Naive thymus-derived CD8-positive, alpha-beta T cell (primary cell): ENCODE measurements at regions of chr2 and their contacts with region 1.

Region 1: GRCh38 chr2:226835796-226836547 is at the start of gene RHBDD1:
- DNase-seq: peak; percentile 90 to 98 (median 94)
- ATAC-seq: peak; percentile 85 to 86
- H3K4me3 Mint-ChIP-seq: peak within 1 kb of the TSS; percentile 87 to 97 (median 94)
- H3K27ac Mint-ChIP-seq: peak within 1 kb of the TSS; percentile 98 to 100 (median 99)
- H3K4me1 Mint-ChIP-seq: peaks cover 22 to 63% (median 50%) of the 10 kb centered on the region in 4 donors
- H3K27me3 Mint-ChIP-seq: no peaks in the 10 kb centered on the region
- polyA plus RNA-seq, gene RHBDD1: 13.7 to 20.4 (median 14.8) TPM

Region 2: GRCh38 chr2:226782092-226782713 is 53.8 kb before region 1 on chr2:
- POLR2A ChIA-PET with region 1: no interaction called
- DNase-seq: no peak
- ATAC-seq: no peak
- H3K4me3 Mint-ChIP-seq: peak overlapping the region in 2 of 10 donors; percentile 42 to 60
- H3K27ac Mint-ChIP-seq: peak overlapping the region in 2 of 10 donors; percentile 76 to 80
- H3K4me1 Mint-ChIP-seq: peaks cover 0 to 57% (median 1%) of the 10 kb centered on the region in 4 donors
- H3K27me3 Mint-ChIP-seq: no peaks in the 10 kb centered on the region

Region 3: DNA sequence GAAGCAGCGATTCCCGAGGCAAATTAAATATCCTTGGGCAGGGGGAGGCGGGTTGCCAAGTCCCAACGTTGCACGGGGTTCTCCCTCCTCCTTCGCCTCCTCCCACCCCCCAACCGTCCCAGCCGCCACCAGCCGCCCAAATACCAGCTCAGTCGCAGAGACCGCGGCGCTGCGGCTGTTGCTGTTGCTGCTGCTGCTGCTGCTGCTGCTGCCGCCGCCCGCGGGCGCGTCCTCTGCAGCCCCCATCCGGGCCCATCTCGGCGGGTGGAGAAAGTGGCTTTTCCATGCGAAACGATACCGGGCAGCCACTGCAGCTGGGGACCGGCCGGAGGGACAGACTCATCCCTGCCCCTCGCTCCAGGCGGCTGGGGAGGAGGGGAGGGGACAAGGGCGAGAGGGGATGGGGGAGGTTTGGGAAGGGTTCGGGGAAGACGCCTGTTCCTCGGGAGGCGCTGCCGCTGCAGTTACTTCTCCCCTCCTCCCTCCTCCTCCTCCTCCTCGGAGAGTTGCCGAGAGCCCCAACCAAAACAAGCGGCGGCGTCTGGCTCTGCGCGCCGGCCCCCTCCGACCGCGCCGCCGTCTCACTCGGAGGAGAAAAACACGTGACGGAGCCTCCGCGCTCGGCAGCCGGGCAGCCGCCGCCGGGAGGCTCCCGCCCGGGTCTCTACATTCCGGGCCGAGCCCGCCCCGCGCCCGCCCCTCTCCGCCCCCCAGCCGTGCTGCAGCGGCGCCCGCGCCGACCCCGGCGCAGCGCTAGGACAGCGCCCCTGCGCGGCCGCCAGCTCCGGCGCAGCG is 36.6 kb before region 1 on chr2 and contains the start of gene IRS1:
- POLR2A ChIA-PET with region 1: interaction called, 41 read pairs
- DNase-seq: peak; percentile 57 to 78 (median 68)
- ATAC-seq: peak; percentile 57 to 67
- H3K4me3 Mint-ChIP-seq: peak within 1 kb of the TSS; percentile 88 to 96 (median 92)
- H3K27ac Mint-ChIP-seq: peak within 1 kb of the TSS; percentile 57 to 96 (median 92)
- H3K4me1 Mint-ChIP-seq: peaks cover 8 to 48% (median 45%) of the 10 kb centered on the region in 4 donors
- H3K27me3 Mint-ChIP-seq: peaks cover 0 to 9% (median 4%) of the 10 kb centered on the region in 5 donors
- polyA plus RNA-seq, gene IRS1: 0.51 to 0.84 (median 0.64) TPM

Region 4: GRCh38 chr2:226891780-226892590 is 56.0 kb after region 1 on chr2:
- POLR2A ChIA-PET with region 1: no interaction called
- DNase-seq: no peak
- ATAC-seq: no peak
- H3K4me3 Mint-ChIP-seq: no peak overlapping the region
- H3K27ac Mint-ChIP-seq: no peak overlapping the region
- H3K4me1 Mint-ChIP-seq: peaks cover 0 to 13% (median 5%) of the 10 kb centered on the region in 4 donors
- H3K27me3 Mint-ChIP-seq: no peaks in the 10 kb centered on the region

Region 5: DNA sequence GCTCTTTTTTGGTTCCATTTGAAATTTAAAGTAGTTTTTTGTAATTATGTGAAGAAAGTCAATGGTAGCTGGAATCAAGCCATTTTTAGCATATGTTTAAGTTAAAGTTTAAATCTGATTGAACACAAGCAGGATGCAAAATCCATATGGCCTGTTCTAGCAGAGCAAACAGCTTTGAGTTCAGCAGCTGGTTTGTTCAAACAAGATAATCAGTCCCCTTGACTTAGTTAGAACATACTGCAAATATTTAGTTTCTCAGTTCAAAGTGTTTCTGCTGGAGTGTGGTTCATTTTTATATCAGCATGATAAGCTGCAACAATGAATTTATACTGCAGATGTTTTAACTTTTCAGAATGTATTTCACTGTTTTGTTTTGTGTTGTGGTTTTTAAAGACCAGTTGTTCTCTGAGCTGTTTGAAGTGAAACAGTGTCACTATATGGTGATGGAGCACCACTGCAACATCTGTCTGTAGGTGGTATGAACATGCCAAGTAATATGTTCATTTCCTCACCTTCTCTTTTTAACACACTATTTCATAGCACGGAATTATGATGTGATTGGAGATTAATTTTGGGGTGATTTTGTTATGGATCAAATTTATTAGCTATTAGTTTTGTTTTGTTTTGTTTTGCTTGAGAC is 202.7 kb after region 1 on chr2:
- POLR2A ChIA-PET with region 1: no interaction called
- DNase-seq: no peak
- ATAC-seq: no peak
- H3K4me3 Mint-ChIP-seq: no peak overlapping the region
- H3K27ac Mint-ChIP-seq: no peak overlapping the region
- H3K4me1 Mint-ChIP-seq: no peaks in the 10 kb centered on the region
- H3K27me3 Mint-ChIP-seq: peaks cover 8 to 42% (median 25%) of the 10 kb centered on the region in 5 donors